Esophagus squamous epithelium (tissue), 5 donors: ENCODE measurements at regions of chr5 and their contacts with region 1.

Region 1: GRCh38 chr5:154179846-154180710 is 10.5 kb upstream of the GALNT10 start:
- DNase-seq: no peak
- H3K4me3 ChIP-seq: no peak overlapping the region
- H3K27ac ChIP-seq: no peak overlapping the region
- H3K4me1 ChIP-seq: no peaks in the 10 kb centered on the region
- H3K27me3 ChIP-seq: peaks cover 0 to 20% (median 0%) of the 10 kb centered on the region in 4 donors
- CTCF ChIP-seq: peak; percentile 56 to 74 (median 64)
- POLR2A ChIP-seq: no peak

Region 2: GRCh38 chr5:154077696-154078095 is 102.4 kb before region 1 on chr5:
- intact Hi-C with region 1: loop called (anchors 5 kb)
- DNase-seq: no peak
- H3K4me3 ChIP-seq: no peak overlapping the region
- H3K27ac ChIP-seq: no peak overlapping the region
- H3K4me1 ChIP-seq: peaks cover 0 to 15% (median 0%) of the 10 kb centered on the region in 3 donors
- H3K27me3 ChIP-seq: no peaks in the 10 kb centered on the region
- CTCF ChIP-seq: no peak
- POLR2A ChIP-seq: no peak

Region 3: DNA sequence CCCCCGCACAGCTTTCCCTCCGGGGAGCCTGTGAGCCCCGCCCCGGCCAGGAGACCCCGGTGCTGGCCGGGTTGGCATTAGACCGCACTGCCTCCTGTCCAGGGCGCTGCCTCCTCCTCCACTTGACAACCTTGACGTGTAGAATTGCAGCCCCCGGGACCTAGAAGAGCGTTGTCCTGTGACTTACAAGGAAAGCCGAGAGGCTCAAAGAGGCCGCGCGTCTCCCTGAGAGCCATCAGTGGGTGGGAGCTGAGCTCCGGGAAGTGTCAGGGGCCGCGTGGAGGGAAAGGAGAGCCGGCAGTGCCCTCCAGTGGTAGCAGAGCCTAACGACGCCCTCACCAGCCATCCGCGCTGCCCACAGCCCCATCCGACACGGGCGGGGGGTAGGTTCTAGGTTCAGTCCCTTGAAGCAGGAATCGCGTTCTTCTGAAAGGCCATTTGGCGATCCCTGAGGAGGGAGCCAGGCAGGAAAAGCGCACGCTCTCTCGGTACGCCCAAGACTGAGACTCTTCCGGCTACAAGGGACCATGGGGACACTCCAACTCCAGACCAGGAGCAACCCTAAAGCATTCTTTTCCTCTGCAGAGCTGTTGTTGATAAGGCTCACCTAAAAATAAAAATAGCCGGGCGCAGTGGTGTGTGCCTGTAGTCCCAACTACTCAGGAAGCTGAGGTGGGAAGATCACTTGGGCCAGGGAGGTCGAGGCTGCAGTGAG is 225.2 kb after region 1 on chr5:
- intact Hi-C with region 1: loop called (anchors 5 kb)
- DNase-seq: peak; percentile 14
- H3K4me3 ChIP-seq: peak overlapping the region in 3 of 4 donors; percentile 20 to 52 (median 31)
- H3K27ac ChIP-seq: no peak overlapping the region
- H3K4me1 ChIP-seq: peaks cover 6 to 11% (median 6%) of the 10 kb centered on the region in 3 donors
- H3K27me3 ChIP-seq: no peaks in the 10 kb centered on the region
- CTCF ChIP-seq: peak; percentile 68 to 88 (median 78)
- POLR2A ChIP-seq: no peak